Colonic mucosa (tissue), 4 donors: ENCODE measurements at regions of chr1 and their contacts with region 1.

Region 1: GRCh38 chr1:66764994-66765578 is 12.8 kb downstream of the DYNLT5 start:
- DNase-seq: peak; percentile 59
- H3K4me3 ChIP-seq: no peak overlapping the region
- H3K27ac ChIP-seq: no peak overlapping the region
- H3K4me1 ChIP-seq: no peaks in the 10 kb centered on the region
- H3K27me3 ChIP-seq: no peaks in the 10 kb centered on the region
- CTCF ChIP-seq: peak; percentile 62

Region 2: DNA sequence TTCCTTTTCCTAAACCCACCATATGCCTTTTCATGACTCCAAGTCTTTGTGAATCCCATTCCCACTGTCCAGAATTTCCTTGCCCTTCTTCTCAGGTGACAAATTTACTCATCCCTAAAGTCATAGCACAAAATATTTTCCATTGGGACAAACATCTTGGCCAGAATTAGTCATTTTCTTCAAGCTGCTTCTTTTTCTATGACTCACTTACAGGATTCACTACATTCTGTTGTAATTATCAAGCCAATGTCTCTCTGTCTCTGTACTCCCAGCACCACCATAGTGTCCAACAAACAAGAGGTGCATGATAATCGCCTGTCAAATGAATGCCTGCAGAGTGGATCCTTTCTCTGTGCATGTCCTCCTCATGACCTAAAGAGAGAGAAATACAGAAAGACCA is 193.3 kb before region 1 on chr1:
- intact Hi-C with region 1: no loop called
- DNase-seq: no peak
- H3K4me3 ChIP-seq: no peak overlapping the region
- H3K27ac ChIP-seq: no peak overlapping the region
- H3K4me1 ChIP-seq: no peaks in the 10 kb centered on the region
- H3K27me3 ChIP-seq: no peaks in the 10 kb centered on the region
- CTCF ChIP-seq: no peak

Region 3: DNA sequence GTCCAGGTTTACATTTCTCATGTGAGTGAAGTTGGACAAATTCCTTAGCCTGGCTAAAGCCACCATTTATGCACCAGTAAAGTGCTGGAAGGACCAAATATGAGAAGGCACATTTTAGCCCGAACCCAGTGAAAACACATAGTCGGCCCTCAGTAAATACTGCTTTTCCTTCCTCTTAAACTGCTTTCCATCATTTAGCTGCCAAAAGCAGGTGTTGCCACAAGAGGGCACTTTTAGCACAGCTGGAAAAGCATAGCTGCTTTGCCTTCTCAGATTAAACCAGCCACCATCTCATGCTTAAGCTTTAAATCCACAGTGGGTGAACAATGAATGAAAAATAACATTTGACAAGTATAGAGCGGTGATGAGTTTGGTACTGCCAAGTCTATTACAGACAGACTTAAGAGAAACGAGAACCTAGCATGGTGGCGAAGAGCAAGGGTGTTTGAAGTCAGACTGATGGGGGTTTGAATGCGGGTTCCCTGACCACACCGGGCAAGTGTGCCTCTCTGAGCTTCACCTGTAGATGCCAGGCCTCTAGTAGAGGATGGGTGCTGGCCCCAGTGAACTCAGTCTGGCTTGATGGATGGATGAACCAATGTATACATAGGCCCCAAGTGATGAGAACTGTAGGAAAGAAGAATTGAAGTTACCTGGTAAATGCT is 231.1 kb after region 1 on chr1:
- intact Hi-C with region 1: loop called (anchors 10 kb)
- DNase-seq: peak; percentile 75
- H3K4me3 ChIP-seq: no peak overlapping the region
- H3K27ac ChIP-seq: no peak overlapping the region
- H3K4me1 ChIP-seq: no peaks in the 10 kb centered on the region
- H3K27me3 ChIP-seq: no peaks in the 10 kb centered on the region
- CTCF ChIP-seq: peak; percentile 56

Region 4: DNA sequence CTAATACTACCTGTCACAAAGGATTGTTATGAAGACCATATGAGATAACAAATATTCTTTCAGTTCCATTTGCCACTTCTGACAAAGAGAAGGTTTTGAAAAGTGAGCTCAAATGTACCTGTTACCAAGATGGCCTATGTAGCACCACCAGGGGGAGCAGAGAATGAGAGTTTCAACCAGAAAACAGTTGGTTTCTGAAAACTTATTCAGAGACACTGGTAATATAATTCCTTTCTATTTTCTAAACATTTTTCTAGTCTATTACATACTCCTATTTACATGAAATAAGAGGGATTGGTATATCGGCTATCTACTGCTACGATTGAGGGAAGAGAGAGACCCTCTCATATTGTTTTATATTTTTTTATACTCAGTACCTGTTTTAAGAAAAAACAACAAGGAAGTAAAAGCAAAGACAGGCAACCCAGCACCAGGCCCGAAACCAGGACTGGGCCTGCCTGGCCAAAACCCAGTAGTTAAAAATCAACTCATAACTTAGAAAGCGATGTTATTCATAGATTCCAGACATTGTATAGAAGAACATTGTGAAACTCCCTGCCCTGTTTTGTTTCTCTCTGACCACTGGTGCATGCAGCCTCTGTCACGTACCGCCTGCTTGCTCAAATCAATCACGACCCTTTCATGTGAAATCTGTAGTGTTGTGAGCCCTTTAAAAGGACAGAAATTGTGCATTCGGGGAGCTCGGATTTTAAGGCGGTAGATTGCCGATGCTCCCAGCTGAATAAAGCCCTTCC is 449.5 kb after region 1 on chr1:
- intact Hi-C with region 1: loop called (anchors 10 kb)
- DNase-seq: peak; percentile 24
- H3K4me3 ChIP-seq: no peak overlapping the region
- H3K27ac ChIP-seq: no peak overlapping the region
- H3K4me1 ChIP-seq: no peaks in the 10 kb centered on the region
- H3K27me3 ChIP-seq: no peaks in the 10 kb centered on the region
- CTCF ChIP-seq: peak; percentile 33